ENCODE measurements at regions of chr4 and their contacts with region 1.

Region 1: GRCh38 chr4:15805583-15806517 is 27.7 kb downstream of the CD38 start:
- DNase-seq: peak; percentile 21
- H3K4me3 ChIP-seq: no peak overlapping the region
- H3K27ac ChIP-seq: no peak overlapping the region
- H3K27me3 ChIP-seq: peaks cover 12% of the 10 kb centered on the region
- CTCF ChIP-seq: peak; percentile 79

Region 2: DNA sequence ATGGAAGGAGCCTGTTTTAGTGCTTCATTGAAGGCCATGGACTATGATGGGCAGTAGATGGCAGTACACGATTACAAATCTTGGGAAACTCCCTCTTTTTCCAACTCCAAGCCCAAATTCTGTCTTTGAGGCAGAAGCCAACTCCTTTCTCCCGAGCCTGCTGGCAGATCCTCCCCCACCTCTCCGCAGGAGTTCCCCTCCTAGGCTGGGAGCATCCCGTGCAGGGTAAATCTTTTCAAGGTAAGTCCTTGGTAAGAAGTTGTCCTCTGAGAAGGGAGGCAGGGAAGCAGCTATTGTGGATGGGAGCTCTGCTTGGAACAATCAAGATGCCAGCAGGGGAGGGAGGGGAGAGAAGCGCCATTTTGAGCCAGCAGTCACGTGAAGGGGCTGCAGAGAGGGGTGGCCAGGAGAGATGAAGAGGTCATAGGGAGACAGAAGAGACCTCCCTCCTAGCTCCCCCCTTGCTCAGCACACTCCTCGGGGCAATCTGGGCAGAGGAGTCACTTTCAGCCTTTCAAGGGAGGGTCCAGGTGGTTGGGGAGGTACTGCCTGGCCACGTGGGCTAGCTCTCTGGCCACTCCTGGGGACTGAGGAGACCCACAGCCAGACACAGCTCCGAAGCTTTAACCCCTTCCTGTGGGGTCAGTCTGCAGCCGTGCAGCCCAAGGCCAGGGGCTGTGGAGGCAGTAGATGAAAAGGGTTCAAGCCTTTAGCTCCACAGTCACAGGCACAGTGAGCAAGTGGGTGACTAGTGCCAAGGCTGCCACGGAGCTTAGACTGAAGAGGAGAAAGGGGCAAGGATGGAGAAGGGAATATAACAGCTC is 326.5 kb before region 1 on chr4:
- CTCF ChIA-PET with region 1: interaction called, 21 read pairs
- POLR2A ChIA-PET with region 1: no interaction called
- DNase-seq: peak; percentile 70
- H3K4me3 ChIP-seq: peak overlapping the region; percentile 69
- H3K27ac ChIP-seq: peak overlapping the region; percentile 97
- H3K27me3 ChIP-seq: no peaks in the 10 kb centered on the region
- CTCF ChIP-seq: peak; percentile 84

Region 3: GRCh38 chr4:15784959-15785634 is 20.8 kb before region 1 on chr4:
- CTCF ChIA-PET with region 1: interaction called, 12 read pairs
- POLR2A ChIA-PET with region 1: no interaction called
- DNase-seq: no peak
- H3K4me3 ChIP-seq: no peak overlapping the region
- H3K27ac ChIP-seq: no peak overlapping the region
- H3K27me3 ChIP-seq: peaks cover 48% of the 10 kb centered on the region
- CTCF ChIP-seq: no peak

Region 4: DNA sequence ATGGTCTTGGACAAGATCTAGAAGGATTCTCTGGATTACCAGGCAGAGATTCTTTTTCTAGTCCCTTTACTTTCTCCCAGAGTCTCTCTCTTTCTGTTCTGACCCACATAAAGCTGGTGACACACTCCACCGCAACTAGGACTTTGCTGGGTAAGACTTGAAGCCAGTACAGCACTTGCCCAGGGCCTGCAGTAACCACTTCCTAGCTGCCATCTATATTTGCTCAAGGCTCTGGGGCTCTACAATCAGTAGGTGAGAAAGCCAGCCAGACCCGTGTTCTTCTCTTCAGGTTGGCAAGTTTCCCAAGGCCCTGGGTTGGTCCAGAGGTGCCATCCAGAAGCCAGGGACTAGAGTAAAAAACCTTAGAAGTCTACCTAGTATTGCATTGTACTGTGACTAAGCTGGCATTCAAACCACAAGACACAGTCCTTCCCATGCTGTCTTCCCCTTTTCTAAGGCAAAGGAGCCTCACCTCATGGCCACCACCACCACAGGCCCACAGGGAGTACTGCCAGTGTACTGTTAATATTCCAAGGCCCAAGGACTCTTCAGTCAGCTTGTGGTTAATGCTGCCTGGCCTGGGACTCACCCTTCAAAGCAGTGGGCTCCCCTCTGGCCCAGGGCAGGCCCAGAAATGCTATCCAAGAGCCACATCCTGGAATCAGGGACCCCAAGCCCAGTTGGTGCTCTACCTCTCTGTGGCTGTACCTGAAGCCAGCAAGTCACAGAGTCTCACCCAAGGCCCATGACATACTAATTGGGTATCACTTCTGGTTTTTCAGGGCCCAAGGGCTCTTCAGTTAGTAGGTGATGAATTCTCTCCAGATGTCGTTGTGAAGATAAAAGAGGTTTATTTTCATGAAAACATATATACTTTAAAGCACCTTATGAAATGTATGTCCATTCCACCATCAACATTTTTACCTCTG is 26.9 kb after region 1 on chr4:
- CTCF ChIA-PET with region 1: interaction called, 10 read pairs
- POLR2A ChIA-PET with region 1: no interaction called
- DNase-seq: no peak
- H3K4me3 ChIP-seq: no peak overlapping the region
- H3K27ac ChIP-seq: no peak overlapping the region
- H3K27me3 ChIP-seq: no peaks in the 10 kb centered on the region
- CTCF ChIP-seq: no peak

Region 5: DNA sequence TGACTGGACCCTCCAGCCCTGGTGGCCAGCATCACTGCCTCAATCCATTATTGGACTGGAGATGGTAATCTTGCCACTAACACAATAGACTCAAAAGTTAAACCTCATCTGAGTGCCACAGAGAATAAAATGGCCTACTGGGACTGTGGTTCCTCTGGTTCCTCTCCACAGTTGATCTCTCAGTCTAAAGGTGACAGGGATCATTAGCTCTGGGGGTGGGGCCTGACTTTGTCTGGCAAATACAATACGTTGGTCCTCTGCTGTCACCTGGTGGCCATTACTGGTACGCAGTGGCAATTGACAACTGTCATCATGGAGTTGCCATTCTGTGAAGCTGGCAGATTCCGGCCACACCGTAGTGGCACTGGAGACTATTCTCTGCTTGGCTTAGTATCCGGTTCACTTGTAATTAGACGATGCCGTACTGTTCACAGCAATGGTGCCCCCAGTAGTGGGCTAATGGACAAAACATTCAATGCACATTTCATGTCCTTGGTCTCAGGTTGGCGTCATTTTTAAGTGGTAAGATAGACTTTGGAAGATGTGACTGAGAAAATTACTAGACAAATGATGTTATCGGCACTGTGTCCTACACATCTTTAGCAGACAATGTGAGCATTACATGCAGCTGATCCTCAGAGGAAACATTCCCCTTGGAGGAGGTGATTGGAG is 150.5 kb after region 1 on chr4:
- CTCF ChIA-PET with region 1: interaction called, 60 read pairs
- POLR2A ChIA-PET with region 1: no interaction called
- DNase-seq: no peak
- H3K4me3 ChIP-seq: no peak overlapping the region
- H3K27ac ChIP-seq: no peak overlapping the region
- H3K27me3 ChIP-seq: peaks cover 9% of the 10 kb centered on the region
- CTCF ChIP-seq: peak; percentile 98

Region 6: GRCh38 chr4:16001484-16001858 is 195.6 kb after region 1 on chr4:
- CTCF ChIA-PET with region 1: interaction called, 62 read pairs
- POLR2A ChIA-PET with region 1: no interaction called
- DNase-seq: peak; percentile 45
- H3K4me3 ChIP-seq: no peak overlapping the region
- H3K27ac ChIP-seq: no peak overlapping the region
- H3K27me3 ChIP-seq: peaks cover 31% of the 10 kb centered on the region
- CTCF ChIP-seq: peak; percentile 94

Measured in AG04450 (cell line).